IMR-90 (cell line): ENCODE measurements at regions of chr6 and their contacts with region 1.

Region 1: DNA sequence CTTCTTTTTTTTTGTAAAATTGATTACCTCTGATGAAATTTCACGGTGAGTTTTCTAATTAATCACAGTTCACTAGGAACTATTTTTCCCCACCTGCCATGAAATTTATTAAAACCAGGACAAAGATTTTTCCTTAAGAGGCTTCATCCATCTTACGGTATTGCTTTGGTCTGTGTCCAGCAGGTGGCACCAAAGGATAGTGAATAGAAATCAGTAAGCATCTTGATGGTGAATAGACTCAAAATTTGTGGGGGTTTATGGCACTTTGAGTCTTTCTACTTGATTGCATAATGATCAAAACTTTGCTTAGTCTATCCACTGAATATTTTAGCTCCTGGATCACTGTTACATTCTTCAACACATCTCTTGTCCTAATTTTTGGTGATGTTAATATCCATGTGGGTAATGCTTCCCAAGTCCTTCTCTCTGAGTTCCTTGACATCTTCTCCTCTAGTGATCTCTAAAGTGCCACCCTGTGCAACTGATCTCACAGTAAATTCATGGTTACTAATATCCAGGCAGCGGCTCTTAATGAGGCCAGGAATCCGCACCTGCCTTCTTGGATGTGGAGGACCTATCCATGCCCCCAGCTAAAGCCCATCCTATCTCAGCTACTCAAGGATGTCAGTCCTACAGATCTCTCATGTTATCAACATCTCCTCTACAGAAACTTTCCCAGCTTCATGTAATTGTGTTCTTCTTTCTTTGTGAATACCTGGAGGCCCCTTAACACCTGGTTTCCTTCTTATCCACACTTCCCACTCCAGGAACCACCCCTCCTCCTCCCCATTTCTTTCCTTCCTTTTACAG is 54.5 kb downstream of the STMND1 start:
- DNase-seq: peak; percentile 89
- ATAC-seq: peak; percentile 90
- H3K4me3 ChIP-seq: no peak overlapping the region
- H3K27ac ChIP-seq: no peak overlapping the region
- H3K4me1 ChIP-seq: no peaks in the 10 kb centered on the region
- H3K27me3 ChIP-seq: peaks cover 13% of the 10 kb centered on the region
- CTCF ChIP-seq: peak; percentile 91
- POLR2A ChIP-seq: peak; percentile 49; the same call in 1 of the 2 replicates
- RAD21 ChIP-seq: peak; percentile 96

Region 2: DNA sequence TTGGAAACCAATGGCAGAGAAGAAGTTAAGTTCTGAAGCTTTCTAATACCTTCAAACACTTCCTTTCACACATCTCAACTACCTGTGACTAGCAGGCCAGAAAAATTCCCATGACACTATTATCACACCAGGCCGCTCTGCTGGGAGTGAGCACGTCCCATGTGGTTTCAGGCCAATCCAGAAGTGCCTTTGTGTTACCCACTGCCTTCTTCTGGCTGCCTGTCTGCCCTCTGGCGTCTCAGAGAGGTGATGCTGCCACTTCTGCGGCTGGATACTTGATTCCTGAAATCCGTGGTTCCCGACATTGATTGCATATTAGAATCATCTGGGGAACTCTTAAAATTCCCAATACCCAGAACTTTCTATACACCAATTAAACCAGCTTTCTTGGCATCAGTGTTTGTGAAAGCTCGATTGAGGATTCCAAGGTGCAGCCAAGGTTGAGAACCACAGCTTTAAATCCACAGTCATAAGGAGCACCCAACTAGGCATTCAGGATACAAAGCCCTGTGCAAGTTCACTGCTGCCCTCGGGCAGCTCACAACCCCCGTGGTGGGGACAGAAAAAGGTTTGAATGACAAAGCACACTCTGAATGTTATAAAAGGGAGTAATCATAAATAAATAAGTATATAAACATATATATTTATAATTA is 11.1 kb after region 1 on chr6:
- CTCF ChIA-PET with region 1: no interaction called
- POLR2A ChIA-PET with region 1: no interaction called
- dilution Hi-C with region 1: no loop called
- in situ Hi-C with region 1: no loop called
- intact Hi-C with region 1: no loop called
- DNase-seq: peak; percentile 15
- ATAC-seq: peak; percentile 61; the same call in 1 of the 2 replicates
- H3K4me3 ChIP-seq: no peak overlapping the region
- H3K27ac ChIP-seq: no peak overlapping the region
- H3K4me1 ChIP-seq: peaks cover 3% of the 10 kb centered on the region; the same call in 1 of the 2 replicates
- H3K27me3 ChIP-seq: no peaks in the 10 kb centered on the region
- CTCF ChIP-seq: peak; percentile 30
- POLR2A ChIP-seq: no peak
- RAD21 ChIP-seq: peak; percentile 14; the same call in 1 of the 2 replicates

Region 3: DNA sequence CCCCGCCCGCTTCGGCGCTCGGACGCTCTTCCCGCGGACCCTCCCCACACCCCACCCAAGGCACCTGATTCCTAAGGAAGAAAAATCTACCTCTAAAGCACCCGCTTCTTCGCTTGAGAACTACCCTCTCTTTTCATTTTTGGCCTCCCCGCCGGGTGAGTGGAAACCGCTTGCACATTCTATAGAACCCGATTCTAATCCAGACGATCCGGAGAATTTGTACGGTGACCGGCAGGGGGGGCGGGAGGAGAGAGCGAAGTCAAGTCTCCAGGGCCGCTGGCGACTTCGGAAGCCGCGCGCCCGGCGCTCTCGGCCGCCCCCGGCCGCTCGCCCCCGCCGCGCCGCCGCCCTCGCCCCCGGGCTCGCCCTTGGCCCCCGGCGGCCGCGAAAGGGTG is 124.8 kb after region 1 on chr6 and contains the start of gene RBM24:
- CTCF ChIA-PET with region 1: no interaction called
- POLR2A ChIA-PET with region 1: no interaction called
- dilution Hi-C with region 1: no loop called
- in situ Hi-C with region 1: no loop called
- intact Hi-C with region 1: loop called (anchors 2 kb)
- DNase-seq: peak; percentile 79
- ATAC-seq: peak; percentile 73
- H3K4me3 ChIP-seq: peak within 1 kb of the TSS; percentile 98
- H3K27ac ChIP-seq: peak within 1 kb of the TSS; percentile 79
- H3K4me1 ChIP-seq: peaks cover 16% of the 10 kb centered on the region
- H3K27me3 ChIP-seq: no peaks in the 10 kb centered on the region
- CTCF ChIP-seq: peak; percentile 53
- POLR2A ChIP-seq: no peak
- RAD21 ChIP-seq: peak; percentile 45
- total RNA-seq, gene RBM24: 4.1 and 6.7 TPM in 2 replicates

Region 4: GRCh38 chr6:17584241-17584803 is 428.0 kb after region 1 on chr6:
- CTCF ChIA-PET with region 1: interaction called, 5 read pairs
- POLR2A ChIA-PET with region 1: no interaction called
- dilution Hi-C with region 1: no loop called
- in situ Hi-C with region 1: no loop called
- intact Hi-C with region 1: loop called (anchors 1 kb)
- DNase-seq: peak; percentile 86
- ATAC-seq: peak; percentile 91
- H3K4me3 ChIP-seq: no peak overlapping the region
- H3K27ac ChIP-seq: no peak overlapping the region
- H3K4me1 ChIP-seq: peaks cover 2% of the 10 kb centered on the region; the same call in 1 of the 2 replicates
- H3K27me3 ChIP-seq: no peaks in the 10 kb centered on the region
- CTCF ChIP-seq: peak; percentile 79
- POLR2A ChIP-seq: no peak
- RAD21 ChIP-seq: peak; percentile 83

Region 5: GRCh38 chr6:17780061-17780460 is 623.7 kb after region 1 on chr6:
- CTCF ChIA-PET with region 1: no interaction called
- POLR2A ChIA-PET with region 1: no interaction called
- dilution Hi-C with region 1: no loop called
- in situ Hi-C with region 1: loop called (anchors 10 kb)
- intact Hi-C with region 1: no loop called
- DNase-seq: no peak
- ATAC-seq: no peak
- H3K4me3 ChIP-seq: no peak overlapping the region
- H3K27ac ChIP-seq: no peak overlapping the region
- H3K4me1 ChIP-seq: no peaks in the 10 kb centered on the region
- H3K27me3 ChIP-seq: no peaks in the 10 kb centered on the region
- CTCF ChIP-seq: no peak
- POLR2A ChIP-seq: no peak
- RAD21 ChIP-seq: no peak

Region 6: GRCh38 chr6:18503593-18504231 is 1347.4 kb after region 1 on chr6:
- CTCF ChIA-PET with region 1: no interaction called
- POLR2A ChIA-PET with region 1: no interaction called
- dilution Hi-C with region 1: no loop called
- in situ Hi-C with region 1: no loop called
- intact Hi-C with region 1: loop called (anchors 2 kb)
- DNase-seq: peak; percentile 85
- ATAC-seq: peak; percentile 86
- H3K4me3 ChIP-seq: no peak overlapping the region
- H3K27ac ChIP-seq: no peak overlapping the region
- H3K4me1 ChIP-seq: peaks cover 15% of the 10 kb centered on the region
- H3K27me3 ChIP-seq: no peaks in the 10 kb centered on the region
- CTCF ChIP-seq: peak; percentile 96
- POLR2A ChIP-seq: peak; percentile 55; the same call in 1 of the 2 replicates
- RAD21 ChIP-seq: peak; percentile 100